Dorsolateral prefrontal cortex (tissue), 120 donors: ENCODE measurements at regions of chr10 and their contacts with region 1.

Region 1: DNA sequence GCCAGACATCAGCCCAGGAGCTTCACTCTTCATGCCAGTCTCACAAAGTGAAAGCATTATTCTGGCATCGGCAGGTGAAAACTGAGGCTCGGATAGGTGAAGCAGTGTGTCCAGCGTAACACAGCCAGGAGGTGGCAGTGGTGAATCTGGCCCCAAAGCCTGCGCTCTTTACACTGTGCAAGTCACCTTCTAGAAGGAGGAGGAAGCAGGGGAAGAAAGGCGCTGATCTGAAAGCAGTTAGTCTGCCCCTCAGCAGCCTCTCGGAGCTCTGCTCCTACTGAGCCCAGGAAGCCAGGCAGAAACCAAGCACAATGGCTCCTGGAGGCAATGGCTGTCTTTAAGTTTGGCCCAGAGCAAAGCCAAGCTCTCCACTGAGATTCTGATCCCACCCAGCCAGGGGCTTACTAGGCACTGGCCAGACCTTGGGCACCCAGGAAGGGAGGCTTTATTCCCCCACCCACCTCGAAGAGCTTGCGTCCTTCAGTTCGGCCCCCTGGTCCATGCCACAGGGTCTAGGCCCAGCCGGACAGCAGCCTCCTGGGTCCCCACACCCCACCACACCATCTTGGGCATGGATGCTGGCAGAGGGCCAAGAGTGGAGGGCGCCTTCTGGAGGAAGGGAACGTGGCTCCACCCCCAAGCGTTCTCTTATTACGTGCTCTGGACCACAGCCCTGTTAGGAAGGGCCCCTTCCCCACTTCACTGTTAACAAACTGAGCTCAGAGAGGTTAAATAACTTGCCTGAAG is 104.5 kb downstream of the GRID1 start:
- DNase-seq: peak in 7 of 10 donors; percentile 2 to 73 (median 55)
- H3K4me3 ChIP-seq: peak overlapping the region in 56 of 59 donors; percentile 0 to 64 (median 36)
- H3K27ac ChIP-seq: peak overlapping the region; percentile 78 to 99 (median 95)
- H3K27me3 ChIP-seq: no peaks in the 10 kb centered on the region
- CTCF ChIP-seq: peak in 51 of 56 donors; percentile 3 to 66 (median 49)

Region 2: DNA sequence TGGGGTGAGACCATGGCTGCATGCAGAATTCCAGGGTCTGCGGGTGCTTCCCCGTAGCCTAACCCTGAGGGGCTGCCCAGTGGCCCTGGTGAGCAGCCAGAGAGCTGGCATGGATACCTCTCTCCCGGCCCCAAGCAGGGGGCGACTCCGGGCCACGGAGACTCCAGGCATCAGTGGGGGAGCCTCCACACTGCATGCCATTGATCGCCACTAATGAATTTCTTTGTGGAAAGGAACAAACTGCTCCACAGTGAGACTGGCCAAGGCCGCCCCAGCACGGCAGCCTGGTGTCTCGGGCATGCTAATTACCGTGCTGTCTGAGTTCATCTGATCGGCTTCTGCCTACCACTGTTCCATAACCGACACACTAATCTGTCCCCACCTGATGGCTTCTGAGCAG is 80.0 kb before region 1 on chr10:
- intact Hi-C with region 1: loop called (anchors 5 kb)
- DNase-seq: peak; percentile 32 to 89 (median 86)
- H3K4me3 ChIP-seq: peak overlapping the region in 34 of 59 donors; percentile 2 to 47 (median 22)
- H3K27ac ChIP-seq: peak overlapping the region in 57 of 59 donors; percentile 3 to 90 (median 74)
- H3K27me3 ChIP-seq: no peaks in the 10 kb centered on the region
- CTCF ChIP-seq: peak; percentile 37 to 86 (median 67)

Region 3: DNA sequence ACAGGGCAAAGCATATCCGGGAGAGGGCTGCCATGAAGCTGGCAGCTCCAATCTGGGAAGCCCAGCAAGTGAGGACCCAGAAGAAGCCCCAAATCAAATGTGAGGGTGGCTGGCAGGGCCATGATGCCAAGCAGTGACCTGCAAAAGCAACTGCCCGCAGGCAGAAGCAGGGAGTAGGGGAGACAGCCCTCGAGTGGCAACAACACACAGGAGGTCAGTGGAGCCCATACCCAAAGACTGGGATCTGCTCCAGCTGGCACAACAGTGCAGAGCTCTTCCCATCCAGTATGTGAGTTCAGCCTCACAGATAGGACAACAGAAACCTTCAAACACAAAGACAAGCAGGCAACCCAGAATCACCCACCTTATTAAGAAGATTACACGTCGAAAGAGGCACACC is 59.5 kb after region 1 on chr10:
- intact Hi-C with region 1: no loop called
- DNase-seq: peak in 6 of 10 donors; percentile 36 to 69 (median 56)
- H3K4me3 ChIP-seq: peak overlapping the region in 2 of 59 donors; percentile 5 to 8
- H3K27ac ChIP-seq: peak overlapping the region in 51 of 59 donors; percentile 2 to 85 (median 63)
- H3K27me3 ChIP-seq: no peaks in the 10 kb centered on the region
- CTCF ChIP-seq: peak in 1 of 56 donors; percentile 7